ENCODE measurements at regions of chr21 and their contacts with region 1.

Region 1: DNA sequence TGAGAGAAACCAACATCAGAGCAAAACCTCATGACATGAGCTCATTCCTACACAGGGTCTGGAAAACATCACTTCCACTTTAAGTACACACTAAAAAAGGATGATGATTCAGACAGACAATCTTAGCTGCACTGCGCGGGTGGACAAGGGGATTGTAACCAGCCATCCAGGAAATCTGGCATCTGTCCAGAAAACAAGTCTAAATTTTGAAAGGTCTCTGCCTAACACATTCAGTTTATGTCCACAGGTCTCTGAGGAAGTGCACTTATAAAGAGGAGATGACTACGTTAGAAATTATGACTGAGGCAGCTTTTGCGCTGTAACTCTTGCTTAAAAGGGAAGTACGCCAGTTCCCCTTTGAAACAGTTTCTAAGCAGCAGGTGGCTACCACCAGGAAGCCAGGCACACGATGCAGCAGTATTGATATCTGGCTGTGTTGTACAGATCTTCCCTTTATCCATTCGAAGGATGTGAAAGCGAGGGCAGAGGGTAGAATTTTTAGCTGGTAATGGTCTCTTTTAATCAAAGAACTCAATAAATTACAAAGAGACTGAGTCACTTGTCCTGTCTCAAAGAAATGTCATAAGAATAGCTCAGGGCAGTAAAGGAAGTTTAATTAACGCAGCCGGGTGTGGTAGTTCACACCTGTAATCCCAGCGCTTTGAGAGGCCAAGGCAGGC is 128.0 kb downstream of the SETD4 start:
- DNase-seq: peak; percentile 95
- H3K4me3 ChIP-seq: peak overlapping the region in 1 of 3 experiments; percentile 21
- H3K27ac ChIP-seq: peak overlapping the region; percentile 87
- H3K4me1 ChIP-seq: peaks cover 26% of the 10 kb centered on the region
- H3K27me3 ChIP-seq: no peaks in the 10 kb centered on the region
- CTCF ChIP-seq: no peak
- POLR2A ChIP-seq: no peak

Region 2: DNA sequence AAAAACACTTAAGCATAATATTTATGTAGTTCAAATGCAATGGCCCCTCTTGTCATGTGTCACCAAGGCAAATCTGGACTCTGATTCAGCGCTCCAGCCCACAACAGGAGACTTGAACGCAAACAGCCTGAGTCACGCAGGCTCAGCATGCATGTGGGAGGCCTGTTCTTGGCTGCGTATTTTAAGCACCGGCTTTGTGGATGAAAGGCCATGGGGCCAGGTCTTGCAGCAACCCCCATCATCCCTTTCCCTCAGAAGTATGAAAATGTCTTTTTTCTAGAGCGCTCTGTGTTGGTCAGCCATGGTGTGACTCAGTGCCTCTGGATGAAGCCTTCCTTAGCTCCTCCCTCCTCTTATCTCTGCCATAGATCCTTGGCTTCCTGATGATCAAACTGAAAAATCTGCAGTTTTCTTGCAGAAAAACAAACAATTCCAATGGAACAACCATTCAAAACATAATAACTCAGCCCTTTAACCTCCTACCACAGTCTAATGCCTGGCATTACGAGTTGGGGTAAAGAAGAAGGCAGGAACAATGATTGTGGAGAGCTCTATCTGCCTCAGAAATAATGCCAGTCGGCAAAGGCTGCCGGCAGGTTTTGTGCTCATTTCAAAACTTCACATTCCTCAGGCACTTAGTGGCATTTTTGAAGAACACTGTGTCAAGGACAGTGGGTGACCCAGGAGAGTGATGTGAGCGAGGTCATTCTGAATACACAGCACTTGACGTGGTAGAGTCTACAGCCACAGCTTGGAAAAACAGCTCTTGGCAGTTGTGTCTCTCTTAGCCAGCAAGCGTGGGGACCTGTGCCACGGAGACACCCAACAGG is 1096.1 kb before region 1 on chr21:
- CTCF ChIA-PET with region 1: no interaction called
- POLR2A ChIA-PET with region 1: no interaction called
- dilution Hi-C with region 1: no loop called
- intact Hi-C with region 1: loop called (anchors 1 kb)
- DNase-seq: peak; percentile 98
- H3K4me3 ChIP-seq: peak overlapping the region in 1 of 3 experiments; percentile 3
- H3K27ac ChIP-seq: peak overlapping the region; percentile 78
- H3K4me1 ChIP-seq: peaks cover 30% of the 10 kb centered on the region
- H3K27me3 ChIP-seq: no peaks in the 10 kb centered on the region
- CTCF ChIP-seq: no peak
- POLR2A ChIP-seq: peak; percentile 26

Region 3: GRCh38 chr21:35375115-35375514 is 557.3 kb before region 1 on chr21:
- CTCF ChIA-PET with region 1: no interaction called
- POLR2A ChIA-PET with region 1: no interaction called
- dilution Hi-C with region 1: no loop called
- intact Hi-C with region 1: loop called (anchors 5 kb)
- DNase-seq: peak; percentile 66
- H3K4me3 ChIP-seq: no peak overlapping the region
- H3K27ac ChIP-seq: peak overlapping the region; percentile 66
- H3K4me1 ChIP-seq: peaks cover 50% of the 10 kb centered on the region
- H3K27me3 ChIP-seq: no peaks in the 10 kb centered on the region
- CTCF ChIP-seq: no peak
- POLR2A ChIP-seq: peak; percentile 41

Region 4: GRCh38 chr21:35840197-35840799 is 92.1 kb before region 1 on chr21:
- CTCF ChIA-PET with region 1: interaction called, 26 read pairs
- POLR2A ChIA-PET with region 1: no interaction called
- dilution Hi-C with region 1: no loop called
- intact Hi-C with region 1: no loop called
- DNase-seq: peak; percentile 78
- H3K4me3 ChIP-seq: no peak overlapping the region
- H3K27ac ChIP-seq: no peak overlapping the region
- H3K4me1 ChIP-seq: no peaks in the 10 kb centered on the region
- H3K27me3 ChIP-seq: peaks cover 0 to 2% of the 10 kb centered on the region in 2 experiments
- CTCF ChIP-seq: peak; percentile 65 to 71
- POLR2A ChIP-seq: no peak

Region 5: DNA sequence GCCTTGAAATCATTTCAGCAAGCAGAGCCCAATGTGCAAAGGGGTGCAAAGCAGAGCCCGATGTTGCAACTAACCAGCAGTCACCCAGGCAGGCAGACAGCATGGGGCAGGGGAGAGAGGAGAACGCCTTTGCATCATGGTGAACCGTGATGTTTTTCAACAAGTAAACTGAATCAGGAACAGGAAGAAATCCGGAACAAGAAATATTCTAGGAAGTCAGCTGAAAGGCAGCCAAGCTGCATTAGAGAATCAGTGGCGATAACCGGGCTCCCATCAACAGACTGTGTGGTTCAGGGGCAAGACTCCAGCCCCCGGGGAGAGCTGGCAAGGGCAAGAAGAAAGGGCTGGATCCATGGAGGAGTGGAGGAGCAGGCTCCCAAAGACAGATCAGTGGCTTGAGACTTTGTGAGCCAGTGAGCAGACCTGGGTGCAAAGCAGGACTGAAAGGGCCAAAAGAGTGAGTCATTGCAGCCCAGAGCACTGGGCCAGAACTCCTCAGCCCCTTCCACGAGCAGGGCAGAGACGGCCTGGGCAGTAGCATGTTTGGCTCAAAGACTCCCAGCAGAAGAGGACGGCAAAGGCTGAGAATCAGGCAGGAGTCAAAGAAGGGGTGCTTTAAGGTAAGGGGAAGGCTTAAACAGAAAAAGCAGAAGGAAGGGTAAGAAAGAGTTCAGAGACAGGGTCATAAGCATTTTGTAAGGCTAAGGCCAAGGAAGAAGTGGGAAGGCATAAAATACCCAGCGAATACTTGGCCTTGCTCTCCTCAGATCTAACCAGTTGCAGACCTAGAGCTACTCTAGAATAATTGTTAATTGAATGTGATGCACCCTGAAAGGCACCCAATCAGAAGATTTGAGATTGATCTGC is 27.0 kb before region 1 on chr21:
- CTCF ChIA-PET with region 1: interaction called, 3 read pairs
- POLR2A ChIA-PET with region 1: no interaction called
- dilution Hi-C with region 1: no loop called
- intact Hi-C with region 1: loop called (anchors 1 kb)
- DNase-seq: peak; percentile 56
- H3K4me3 ChIP-seq: no peak overlapping the region
- H3K27ac ChIP-seq: no peak overlapping the region
- H3K4me1 ChIP-seq: peaks cover 13% of the 10 kb centered on the region
- H3K27me3 ChIP-seq: no peaks in the 10 kb centered on the region
- CTCF ChIP-seq: no peak
- POLR2A ChIP-seq: no peak